ENCODE measurements at regions of chr11 and their contacts with region 1.

Region 1: GRCh38 chr11:62315431-62315830 is 16.6 kb upstream of the SCGB1D4 start:
- DNase-seq: no peak
- ATAC-seq: no peak
- H3K4me3 ChIP-seq: no peak overlapping the region
- H3K27ac ChIP-seq: no peak overlapping the region
- H3K4me1 ChIP-seq: no peaks in the 10 kb centered on the region
- CTCF ChIP-seq: no peak
- EP300 ChIP-seq: no peak
- POLR2A ChIP-seq: no peak
- RAD21 ChIP-seq: no peak

Region 2: DNA sequence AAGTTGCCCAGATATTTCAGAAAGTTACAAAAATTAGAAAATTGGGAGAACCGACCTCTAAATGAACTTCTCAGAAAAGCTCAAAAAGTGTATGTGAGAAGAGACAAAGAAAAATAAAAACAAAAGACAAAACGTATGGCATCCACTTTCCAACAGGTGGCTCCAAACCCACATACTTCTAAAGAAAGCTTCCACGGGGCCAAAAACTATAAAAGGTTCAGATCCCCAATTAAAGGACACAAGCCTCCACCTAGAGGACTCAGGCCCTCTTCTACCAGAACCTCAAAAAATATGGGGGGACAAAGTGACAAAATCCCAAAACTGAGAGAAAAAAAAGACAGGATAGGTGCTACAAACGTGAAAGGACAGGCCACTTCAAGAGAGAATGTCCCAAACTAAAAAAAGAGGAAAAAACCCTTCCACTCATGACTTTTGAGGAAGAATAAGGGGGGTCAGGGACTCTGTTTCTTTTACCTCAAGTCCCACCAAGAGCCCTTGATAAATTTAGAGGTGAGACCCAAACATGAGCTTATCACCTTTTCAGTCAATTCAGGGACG is 98.2 kb before region 1 on chr11:
- CTCF ChIA-PET with region 1: interaction called, 11 read pairs
- POLR2A ChIA-PET with region 1: no interaction called
- DNase-seq: peak in 1 of 2 experiments; percentile 46
- ATAC-seq: peak; percentile 24 to 56; a peak in 2 of 6 replicates
- H3K4me3 ChIP-seq: no peak overlapping the region
- H3K27ac ChIP-seq: no peak overlapping the region
- H3K4me1 ChIP-seq: no peaks in the 10 kb centered on the region
- CTCF ChIP-seq: peak; percentile 76
- EP300 ChIP-seq: no peak
- POLR2A ChIP-seq: no peak
- RAD21 ChIP-seq: peak; percentile 82 to 84

Region 3: DNA sequence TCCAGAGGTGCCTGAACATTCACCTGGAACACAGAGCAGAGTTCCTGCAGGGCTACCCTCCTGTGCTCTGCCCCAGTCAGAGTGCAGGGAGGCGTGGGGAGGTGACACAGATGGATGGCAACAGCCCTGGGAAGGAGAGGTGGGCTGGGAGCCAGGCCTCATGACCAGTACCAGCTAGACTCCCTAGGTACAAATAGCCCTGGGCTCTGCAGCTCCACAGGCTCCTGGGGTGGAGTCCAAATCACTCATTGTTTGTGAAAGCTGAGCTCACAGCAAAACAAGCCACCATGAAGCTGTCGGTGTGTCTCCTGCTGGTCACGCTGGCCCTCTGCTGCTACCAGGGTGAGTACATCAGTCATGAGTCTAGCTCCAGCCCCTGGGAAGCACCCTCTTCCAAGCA is 73.4 kb before region 1 on chr11 and contains the start of gene SCGB1D2:
- CTCF ChIA-PET with region 1: interaction called, 10 read pairs
- POLR2A ChIA-PET with region 1: no interaction called
- DNase-seq: peak; percentile 23 to 50
- ATAC-seq: peak; percentile 44 to 62; a peak in 5 of 6 replicates
- H3K4me3 ChIP-seq: no peak within 1 kb of the TSS
- H3K27ac ChIP-seq: no peak within 1 kb of the TSS
- H3K4me1 ChIP-seq: peaks cover 8% of the 10 kb centered on the region; the same call in 2 of the 3 replicates
- CTCF ChIP-seq: no peak
- EP300 ChIP-seq: no peak
- POLR2A ChIP-seq: no peak
- RAD21 ChIP-seq: no peak
- polyA plus RNA-seq, gene SCGB1D2: not detected in 2 replicates